K562 (cell line): ENCODE measurements at regions of chr7 and their contacts with region 1.

Region 1: GRCh38 chr7:25093268-25093826 is 31.7 kb downstream of the CYCS start:
- DNase-seq: peak; percentile 78 to 89 (median 82)
- ATAC-seq: peak; percentile 97
- H3K4me3 ChIP-seq: no peak overlapping the region
- H3K27ac ChIP-seq: no peak overlapping the region
- H3K4me1 ChIP-seq: peaks cover 2 to 3% of the 10 kb centered on the region in 2 experiments; a peak in 3 of 5 replicates
- H3K27me3 ChIP-seq: no peaks in the 10 kb centered on the region
- CTCF ChIP-seq: peak; percentile 91 to 94 (median 91)
- EP300 ChIP-seq: 0 out of 2 replicates have a peak, but pooled peaks have one; percentile 25
- POLR2A ChIP-seq: no peak
- RAD21 ChIP-seq: peak; percentile 79 to 88

Region 2: GRCh38 chr7:23570592-23571200 is 1522.7 kb before region 1 on chr7:
- CTCF ChIA-PET with region 1: interaction called, 5 read pairs
- POLR2A ChIA-PET with region 1: no interaction called
- in situ Hi-C with region 1: loop called (anchors 25 kb)
- intact Hi-C with region 1: no loop called
- DNase-seq: peak; percentile 62 to 86 (median 69)
- ATAC-seq: peak; percentile 98
- H3K4me3 ChIP-seq: no peak overlapping the region
- H3K27ac ChIP-seq: no peak overlapping the region
- H3K4me1 ChIP-seq: peaks cover 0 to 5% of the 10 kb centered on the region in 2 experiments; a peak in 2 of 5 replicates
- H3K27me3 ChIP-seq: no peaks in the 10 kb centered on the region
- CTCF ChIP-seq: peak; percentile 82 to 91 (median 87)
- EP300 ChIP-seq: no peak
- POLR2A ChIP-seq: no peak
- RAD21 ChIP-seq: peak; percentile 96 to 98

Region 3: GRCh38 chr7:24595671-24596418 is 497.5 kb before region 1 on chr7:
- CTCF ChIA-PET with region 1: no interaction called
- POLR2A ChIA-PET with region 1: no interaction called
- in situ Hi-C with region 1: no loop called
- intact Hi-C with region 1: loop called (anchors 10 kb)
- DNase-seq: no peak
- ATAC-seq: no peak
- H3K4me3 ChIP-seq: no peak overlapping the region
- H3K27ac ChIP-seq: no peak overlapping the region
- H3K4me1 ChIP-seq: no peaks in the 10 kb centered on the region
- H3K27me3 ChIP-seq: no peaks in the 10 kb centered on the region
- CTCF ChIP-seq: no peak
- EP300 ChIP-seq: no peak
- POLR2A ChIP-seq: no peak
- RAD21 ChIP-seq: no peak

Region 4: DNA sequence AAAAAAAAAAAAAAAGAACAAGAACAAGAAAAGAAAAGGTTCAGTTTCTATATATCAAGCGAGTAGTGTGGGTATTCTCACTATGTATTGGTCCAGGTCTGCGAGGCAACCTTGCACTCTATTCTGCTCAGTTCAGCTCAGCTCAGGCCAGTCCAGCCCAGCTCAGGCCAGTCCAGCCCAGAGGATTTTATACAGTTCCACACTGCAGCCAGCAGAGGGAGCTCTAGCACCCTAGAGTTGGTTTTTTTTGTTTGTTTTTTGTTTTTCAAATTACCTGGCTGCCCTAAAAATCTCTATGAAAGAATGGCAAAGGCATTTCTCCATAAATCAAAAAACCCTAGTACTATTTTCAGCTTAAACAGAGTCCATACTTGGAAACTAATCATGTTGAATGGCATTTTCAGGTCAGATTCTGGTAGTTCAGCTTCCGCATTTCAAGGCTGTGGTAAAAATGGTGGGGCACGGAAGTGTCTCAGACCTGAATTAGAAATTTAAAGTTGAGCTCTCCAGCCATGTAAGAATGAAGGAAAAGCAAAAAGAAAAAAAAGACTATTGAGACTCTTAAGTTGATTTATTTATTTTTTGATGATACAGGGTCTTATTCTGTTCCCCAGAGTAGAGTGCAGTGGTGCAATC is 280.9 kb before region 1 on chr7:
- CTCF ChIA-PET with region 1: interaction called, 55 read pairs
- POLR2A ChIA-PET with region 1: no interaction called
- in situ Hi-C with region 1: loop called (anchors 5 kb)
- intact Hi-C with region 1: loop called (anchors 1 kb)
- DNase-seq: peak; percentile 60 to 73 (median 64)
- ATAC-seq: peak; percentile 99
- H3K4me3 ChIP-seq: no peak overlapping the region
- H3K27ac ChIP-seq: no peak overlapping the region
- H3K4me1 ChIP-seq: no peaks in the 10 kb centered on the region
- H3K27me3 ChIP-seq: no peaks in the 10 kb centered on the region
- CTCF ChIP-seq: peak; percentile 74 to 88 (median 85)
- EP300 ChIP-seq: no peak
- POLR2A ChIP-seq: no peak
- RAD21 ChIP-seq: peak; percentile 75 to 76

Region 5: GRCh38 chr7:24896031-24896501 is 197.3 kb before region 1 on chr7:
- CTCF ChIA-PET with region 1: interaction called, 3 read pairs
- POLR2A ChIA-PET with region 1: no interaction called
- in situ Hi-C with region 1: no loop called
- intact Hi-C with region 1: loop called (anchors 5 kb)
- DNase-seq: no peak
- ATAC-seq: no peak
- H3K4me3 ChIP-seq: no peak overlapping the region
- H3K27ac ChIP-seq: no peak overlapping the region
- H3K4me1 ChIP-seq: peaks cover 5 to 31% of the 10 kb centered on the region in 2 experiments
- H3K27me3 ChIP-seq: no peaks in the 10 kb centered on the region
- CTCF ChIP-seq: 0 out of 6 replicates have a peak, but pooled peaks of 1 of the 3 experiments have one; percentile 12
- EP300 ChIP-seq: no peak
- POLR2A ChIP-seq: no peak
- RAD21 ChIP-seq: no peak

Region 6: DNA sequence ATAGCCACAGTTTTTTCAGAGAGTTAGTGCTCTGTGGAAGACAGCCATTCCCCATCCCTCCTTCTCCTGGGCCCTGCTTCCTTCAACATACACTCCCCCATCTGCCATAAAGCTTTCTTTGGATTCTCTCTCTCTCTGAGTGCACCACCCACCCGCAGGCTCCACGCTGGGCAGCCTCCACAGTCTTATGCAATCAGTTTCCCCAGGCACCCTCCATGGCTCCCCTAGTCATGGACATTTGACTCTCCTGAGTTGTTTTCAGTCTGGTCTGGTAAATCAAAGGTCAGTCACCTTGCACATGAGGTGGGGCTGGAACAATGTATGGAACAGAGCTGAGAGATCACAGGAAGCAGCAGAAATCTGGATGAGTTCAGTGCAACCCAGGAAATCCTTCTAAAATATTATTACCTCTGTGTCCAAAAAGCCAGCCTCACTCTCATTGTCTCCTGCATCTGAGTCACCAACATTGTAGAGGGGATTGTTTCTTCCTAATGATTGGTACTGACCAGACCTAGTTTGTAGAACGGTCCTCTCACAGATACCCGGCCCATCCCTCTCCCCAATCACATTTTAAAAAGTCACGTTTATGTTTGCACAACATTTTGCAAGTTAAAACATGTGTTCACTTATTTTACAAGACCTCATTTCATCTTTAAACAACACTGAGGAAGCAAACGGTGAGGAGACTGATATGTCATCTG is 38.4 kb before region 1 on chr7:
- CTCF ChIA-PET with region 1: no interaction called
- POLR2A ChIA-PET with region 1: no interaction called
- in situ Hi-C with region 1: no loop called
- intact Hi-C with region 1: no loop called
- DNase-seq: no peak
- ATAC-seq: no peak
- H3K4me3 ChIP-seq: no peak overlapping the region
- H3K27ac ChIP-seq: no peak overlapping the region
- H3K4me1 ChIP-seq: no peaks in the 10 kb centered on the region; a peak in 2 of 5 replicates
- H3K27me3 ChIP-seq: peaks cover 3 to 12% of the 10 kb centered on the region in 2 experiments; a peak in 4 of 5 replicates
- CTCF ChIP-seq: no peak
- EP300 ChIP-seq: no peak
- POLR2A ChIP-seq: no peak
- RAD21 ChIP-seq: no peak